Caco-2 (cell line): ENCODE measurements at regions of chr2 and their contacts with region 1.

Region 1: GRCh38 chr2:28952816-28953211 is 28.3 kb upstream of the TOGARAM2 start:
- DNase-seq: no peak
- H3K4me3 ChIP-seq: no peak overlapping the region
- H3K4me3 Mint-ChIP-seq: no peak overlapping the region
- H3K27ac Mint-ChIP-seq: no peak overlapping the region
- H3K4me1 ChIP-seq: peaks cover 25% of the 10 kb centered on the region
- H3K4me1 Mint-ChIP-seq: peaks cover 27% of the 10 kb centered on the region
- H3K27me3 ChIP-seq: no peaks in the 10 kb centered on the region
- H3K27me3 Mint-ChIP-seq: no peaks in the 10 kb centered on the region
- CTCF ChIP-seq: peak in 1 of 2 experiments; percentile 37

Region 2: GRCh38 chr2:28821295-28821958 is 131.4 kb before region 1 on chr2:
- CTCF ChIA-PET with region 1: no interaction called
- POLR2A ChIA-PET with region 1: no interaction called
- intact Hi-C with region 1: loop called (anchors 1 kb)
- DNase-seq: peak; percentile 69 to 87
- H3K4me3 ChIP-seq: no peak overlapping the region
- H3K4me3 Mint-ChIP-seq: no peak overlapping the region
- H3K27ac Mint-ChIP-seq: no peak overlapping the region
- H3K4me1 ChIP-seq: no peaks in the 10 kb centered on the region
- H3K4me1 Mint-ChIP-seq: no peaks in the 10 kb centered on the region
- H3K27me3 ChIP-seq: no peaks in the 10 kb centered on the region
- H3K27me3 Mint-ChIP-seq: no peaks in the 10 kb centered on the region
- CTCF ChIP-seq: peak; percentile 68 to 75